Activated B cell treated with CpG ODN at 0.5 μM for 24 hours (primary cell): ENCODE measurements at regions of chr1 and their contacts with region 1.

Region 1: GRCh38 chr1:32335790-32336590 is at the start of gene MARCKSL1:
- DNase-seq: peak; percentile 90
- ATAC-seq: peak; percentile 54
- H3K4me3 Mint-ChIP-seq: peak within 1 kb of the TSS; percentile 86
- H3K27ac Mint-ChIP-seq: peak within 1 kb of the TSS; percentile 87
- H3K4me1 Mint-ChIP-seq: peaks cover 61% of the 10 kb centered on the region
- H3K27me3 Mint-ChIP-seq: no peaks in the 10 kb centered on the region
- CTCF ChIP-seq: no peak
- total RNA-seq, gene MARCKSL1: 132 TPM in 2 replicates

Region 2: GRCh38 chr1:31938174-31938950 is 397.6 kb before region 1 on chr1 and contains the start of gene PTP4A2:
- CTCF ChIA-PET with region 1: no interaction called
- POLR2A ChIA-PET with region 1: no interaction called
- intact Hi-C with region 1: loop called (anchors 10 kb)
- DNase-seq: peak; percentile 88
- ATAC-seq: peak; percentile 78
- H3K4me3 Mint-ChIP-seq: peak within 1 kb of the TSS; percentile 91
- H3K27ac Mint-ChIP-seq: peak within 1 kb of the TSS; percentile 93
- H3K4me1 Mint-ChIP-seq: peaks cover 77% of the 10 kb centered on the region
- H3K27me3 Mint-ChIP-seq: no peaks in the 10 kb centered on the region
- CTCF ChIP-seq: no peak
- total RNA-seq, gene PTP4A2: 249 and 275 TPM in 2 replicates

Region 3: GRCh38 chr1:32200226-32201010 is 135.6 kb before region 1 on chr1 and contains the start of gene CCDC28B:
- CTCF ChIA-PET with region 1: no interaction called
- POLR2A ChIA-PET with region 1: interaction called, 37 read pairs
- intact Hi-C with region 1: loop called (anchors 2 kb)
- DNase-seq: peak; percentile 62
- ATAC-seq: peak; percentile 51
- H3K4me3 Mint-ChIP-seq: peak within 1 kb of the TSS; percentile 87
- H3K27ac Mint-ChIP-seq: peak within 1 kb of the TSS; percentile 87
- H3K4me1 Mint-ChIP-seq: peaks cover 49% of the 10 kb centered on the region
- H3K27me3 Mint-ChIP-seq: no peaks in the 10 kb centered on the region
- CTCF ChIP-seq: no peak
- total RNA-seq, gene CCDC28B: 50.4 and 56.9 TPM in 2 replicates

Region 4: DNA sequence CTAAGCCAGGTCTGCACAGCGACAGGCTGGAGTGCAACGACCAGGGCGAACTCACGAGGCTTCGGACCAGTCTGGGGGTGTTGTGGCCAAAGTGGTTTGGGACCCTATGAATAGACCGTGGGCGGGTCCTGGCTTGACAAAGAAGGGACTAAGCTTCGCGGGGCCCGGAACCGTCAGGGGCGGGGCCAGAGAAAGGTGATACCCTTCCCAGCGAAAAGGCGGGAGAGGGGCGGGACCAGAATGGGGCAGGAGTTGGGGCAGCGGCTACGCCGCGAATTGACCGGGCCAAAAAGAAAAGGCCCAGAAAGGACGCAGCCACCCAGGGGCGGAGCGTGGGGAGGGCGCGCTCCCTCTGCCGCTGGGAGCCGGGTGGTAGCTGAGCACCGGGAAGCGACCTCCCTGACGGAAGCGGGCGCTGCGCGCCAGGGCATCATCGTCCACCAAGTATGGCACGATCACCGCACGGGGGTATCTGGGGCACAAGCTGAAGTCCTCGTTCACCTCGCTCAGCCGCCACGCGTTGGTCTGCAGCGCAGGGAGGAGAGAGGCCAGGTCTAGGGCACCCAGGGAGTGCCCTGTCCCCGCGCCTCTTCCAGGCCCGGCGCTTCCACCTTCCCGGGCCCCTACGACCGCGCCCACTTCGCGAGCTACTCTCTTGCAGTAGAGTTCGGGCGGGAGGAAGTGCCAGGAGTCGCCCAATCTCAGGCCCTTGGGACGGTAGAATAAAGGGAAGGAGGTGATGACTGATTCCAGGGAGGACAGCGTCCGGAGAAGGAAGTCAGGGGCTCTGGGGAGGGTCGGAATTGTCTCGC is 95.6 kb before region 1 on chr1:
- CTCF ChIA-PET with region 1: interaction called, 10 read pairs
- POLR2A ChIA-PET with region 1: interaction called, 95 read pairs
- intact Hi-C with region 1: loop called (anchors 2 kb)
- DNase-seq: peak; percentile 68
- ATAC-seq: peak; percentile 77
- H3K4me3 Mint-ChIP-seq: peak overlapping the region; percentile 89
- H3K27ac Mint-ChIP-seq: peak overlapping the region; percentile 87
- H3K4me1 Mint-ChIP-seq: peaks cover 21% of the 10 kb centered on the region
- H3K27me3 Mint-ChIP-seq: no peaks in the 10 kb centered on the region
- CTCF ChIP-seq: no peak

Region 5: GRCh38 chr1:32276032-32276782 is 59.8 kb before region 1 on chr1:
- CTCF ChIA-PET with region 1: no interaction called
- POLR2A ChIA-PET with region 1: no interaction called
- intact Hi-C with region 1: no loop called
- DNase-seq: no peak
- ATAC-seq: no peak
- H3K4me3 Mint-ChIP-seq: no peak overlapping the region
- H3K27ac Mint-ChIP-seq: no peak overlapping the region
- H3K4me1 Mint-ChIP-seq: peaks cover 33% of the 10 kb centered on the region
- H3K27me3 Mint-ChIP-seq: no peaks in the 10 kb centered on the region
- CTCF ChIP-seq: no peak

Region 6: DNA sequence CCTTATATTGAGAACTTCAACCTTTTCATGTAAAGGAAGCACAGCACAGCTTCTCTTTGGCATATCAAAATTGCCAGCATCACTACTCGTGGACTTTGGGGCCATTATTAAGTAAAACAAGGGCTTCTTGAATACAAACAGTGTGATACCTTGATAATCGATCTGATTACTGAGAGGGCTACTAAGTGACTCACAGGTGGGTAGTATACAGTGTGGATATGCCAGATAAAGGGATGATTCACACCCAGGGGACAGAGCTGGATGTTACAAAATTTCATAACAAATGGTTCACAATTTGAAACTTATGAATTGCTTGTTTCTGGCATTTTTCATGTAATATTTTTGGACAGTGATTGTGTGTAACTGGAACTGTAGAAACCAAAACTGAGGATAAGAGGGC is 28.7 kb before region 1 on chr1:
- CTCF ChIA-PET with region 1: interaction called, 3 read pairs
- POLR2A ChIA-PET with region 1: interaction called, 18 read pairs
- intact Hi-C with region 1: no loop called
- DNase-seq: no peak
- ATAC-seq: no peak
- H3K4me3 Mint-ChIP-seq: peak overlapping the region; percentile 60
- H3K27ac Mint-ChIP-seq: peak overlapping the region; percentile 22
- H3K4me1 Mint-ChIP-seq: peaks cover 65% of the 10 kb centered on the region
- H3K27me3 Mint-ChIP-seq: no peaks in the 10 kb centered on the region
- CTCF ChIP-seq: no peak

Region 7: DNA sequence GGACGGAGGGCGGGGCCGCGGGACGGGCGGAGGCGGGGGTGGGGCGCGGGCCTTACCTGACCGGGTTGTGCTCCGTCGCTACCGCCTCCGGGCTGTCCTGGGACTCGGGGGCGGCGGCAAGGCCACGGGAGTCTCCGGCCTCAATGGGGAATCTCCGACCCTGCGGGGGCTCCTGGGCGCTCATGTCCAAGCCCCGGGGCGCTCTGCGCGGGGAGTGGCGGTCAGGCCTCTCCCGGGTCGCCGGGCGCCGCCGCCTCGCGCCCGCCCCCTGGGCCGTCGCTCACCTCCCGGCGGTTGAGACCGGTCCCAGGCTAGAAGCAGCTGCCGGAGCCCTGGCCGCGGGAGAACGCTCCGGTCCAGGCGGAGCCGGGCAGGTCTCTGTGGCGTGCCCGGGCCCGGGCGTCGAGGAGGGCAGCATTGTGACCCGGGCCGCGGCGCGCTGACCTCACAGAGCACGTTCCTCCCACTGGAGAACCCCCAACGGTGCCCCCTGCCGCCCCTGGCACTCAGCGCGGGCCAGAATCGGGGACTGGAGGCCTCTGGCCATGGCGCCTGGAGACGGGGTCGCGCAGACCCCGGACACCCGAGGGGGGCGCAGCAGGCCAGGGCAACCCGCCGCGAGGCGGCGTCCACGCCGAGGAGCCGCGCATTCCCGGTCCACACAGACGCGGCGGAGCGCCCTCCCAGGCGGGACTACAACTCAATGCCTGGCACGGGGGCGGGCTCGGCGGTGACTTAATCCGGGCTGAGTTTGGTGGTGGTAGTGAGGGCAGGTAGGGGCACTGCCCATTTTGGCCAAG is 25.9 kb after region 1 on chr1:
- CTCF ChIA-PET with region 1: interaction called, 5 read pairs
- POLR2A ChIA-PET with region 1: interaction called, 75 read pairs
- intact Hi-C with region 1: loop called (anchors 1 kb)
- DNase-seq: peak; percentile 46
- ATAC-seq: peak; percentile 38
- H3K4me3 Mint-ChIP-seq: peak overlapping the region; percentile 58
- H3K27ac Mint-ChIP-seq: peak overlapping the region; percentile 65
- H3K4me1 Mint-ChIP-seq: peaks cover 31% of the 10 kb centered on the region
- H3K27me3 Mint-ChIP-seq: no peaks in the 10 kb centered on the region
- CTCF ChIP-seq: no peak

Region 8: GRCh38 chr1:32413507-32414185 is 77.7 kb after region 1 on chr1:
- CTCF ChIA-PET with region 1: no interaction called
- POLR2A ChIA-PET with region 1: interaction called, 6 read pairs
- intact Hi-C with region 1: loop called (anchors 1 kb)
- DNase-seq: peak; percentile 28
- ATAC-seq: peak; percentile 88
- H3K4me3 Mint-ChIP-seq: no peak overlapping the region
- H3K27ac Mint-ChIP-seq: no peak overlapping the region
- H3K4me1 Mint-ChIP-seq: peaks cover 3% of the 10 kb centered on the region
- H3K27me3 Mint-ChIP-seq: peaks cover 15% of the 10 kb centered on the region
- CTCF ChIP-seq: no peak

Region 9: GRCh38 chr1:32501865-32502264 is 165.9 kb after region 1 on chr1:
- CTCF ChIA-PET with region 1: no interaction called
- POLR2A ChIA-PET with region 1: no interaction called
- intact Hi-C with region 1: no loop called
- DNase-seq: no peak
- ATAC-seq: no peak
- H3K4me3 Mint-ChIP-seq: peak overlapping the region; percentile 41
- H3K27ac Mint-ChIP-seq: no peak overlapping the region
- H3K4me1 Mint-ChIP-seq: peaks cover 5% of the 10 kb centered on the region
- H3K27me3 Mint-ChIP-seq: peaks cover 38% of the 10 kb centered on the region
- CTCF ChIP-seq: no peak